T-cell (primary cell): ENCODE measurements at regions of chr1 and their contacts with region 1.

Region 1: DNA sequence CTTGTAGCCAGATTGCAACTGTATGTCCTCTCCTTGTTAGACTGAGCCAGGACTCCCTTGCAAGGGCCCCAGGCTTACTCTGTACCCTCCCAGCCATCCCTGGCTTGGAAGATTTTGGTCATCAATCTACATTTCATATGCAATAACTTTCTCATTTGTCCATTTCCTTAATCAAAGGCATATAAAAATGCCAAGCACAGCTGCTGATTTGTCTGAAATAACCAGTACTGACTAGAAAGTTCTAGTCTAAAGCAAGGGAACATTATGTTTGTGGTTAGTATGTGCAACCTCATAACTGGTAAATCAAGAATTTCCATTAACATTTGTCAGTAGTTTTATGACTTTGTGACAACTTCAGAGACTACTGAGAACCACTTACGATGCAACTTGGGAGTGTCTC is 370.2 kb downstream of the ST6GALNAC3 start:
- DNase-seq: no peak
- ATAC-seq: no peak
- H3K4me3 ChIP-seq: no peak overlapping the region
- H3K4me3 Mint-ChIP-seq: no peak overlapping the region
- H3K27ac ChIP-seq: no peak overlapping the region
- H3K27ac Mint-ChIP-seq: no peak overlapping the region
- H3K4me1 ChIP-seq: no peaks in the 10 kb centered on the region
- H3K4me1 Mint-ChIP-seq: no peaks in the 10 kb centered on the region
- H3K27me3 ChIP-seq: no peaks in the 10 kb centered on the region
- H3K27me3 Mint-ChIP-seq: no peaks in the 10 kb centered on the region

Region 2: GRCh38 chr1:75079538-75080290 is 1365.1 kb before region 1 on chr1:
- CTCF ChIA-PET with region 1: no interaction called
- POLR2A ChIA-PET with region 1: no interaction called
- DNase-seq: no peak
- ATAC-seq: no peak
- H3K4me3 ChIP-seq: no peak overlapping the region
- H3K4me3 Mint-ChIP-seq: no peak overlapping the region
- H3K27ac ChIP-seq: no peak overlapping the region
- H3K27ac Mint-ChIP-seq: no peak overlapping the region
- H3K4me1 ChIP-seq: no peaks in the 10 kb centered on the region
- H3K4me1 Mint-ChIP-seq: no peaks in the 10 kb centered on the region
- H3K27me3 ChIP-seq: no peaks in the 10 kb centered on the region
- H3K27me3 Mint-ChIP-seq: no peaks in the 10 kb centered on the region

Region 3: GRCh38 chr1:76388261-76388660 is 56.5 kb before region 1 on chr1:
- CTCF ChIA-PET with region 1: no interaction called
- POLR2A ChIA-PET with region 1: interaction called in 1 of 2 experiments, 16 read pairs
- DNase-seq: no peak
- ATAC-seq: no peak
- H3K4me3 ChIP-seq: no peak overlapping the region
- H3K4me3 Mint-ChIP-seq: no peak overlapping the region
- H3K27ac ChIP-seq: no peak overlapping the region
- H3K27ac Mint-ChIP-seq: no peak overlapping the region
- H3K4me1 ChIP-seq: no peaks in the 10 kb centered on the region
- H3K4me1 Mint-ChIP-seq: peaks cover 0 to 10% (median 3%) of the 10 kb centered on the region in 3 donors
- H3K27me3 ChIP-seq: no peaks in the 10 kb centered on the region
- H3K27me3 Mint-ChIP-seq: no peaks in the 10 kb centered on the region

Region 4: DNA sequence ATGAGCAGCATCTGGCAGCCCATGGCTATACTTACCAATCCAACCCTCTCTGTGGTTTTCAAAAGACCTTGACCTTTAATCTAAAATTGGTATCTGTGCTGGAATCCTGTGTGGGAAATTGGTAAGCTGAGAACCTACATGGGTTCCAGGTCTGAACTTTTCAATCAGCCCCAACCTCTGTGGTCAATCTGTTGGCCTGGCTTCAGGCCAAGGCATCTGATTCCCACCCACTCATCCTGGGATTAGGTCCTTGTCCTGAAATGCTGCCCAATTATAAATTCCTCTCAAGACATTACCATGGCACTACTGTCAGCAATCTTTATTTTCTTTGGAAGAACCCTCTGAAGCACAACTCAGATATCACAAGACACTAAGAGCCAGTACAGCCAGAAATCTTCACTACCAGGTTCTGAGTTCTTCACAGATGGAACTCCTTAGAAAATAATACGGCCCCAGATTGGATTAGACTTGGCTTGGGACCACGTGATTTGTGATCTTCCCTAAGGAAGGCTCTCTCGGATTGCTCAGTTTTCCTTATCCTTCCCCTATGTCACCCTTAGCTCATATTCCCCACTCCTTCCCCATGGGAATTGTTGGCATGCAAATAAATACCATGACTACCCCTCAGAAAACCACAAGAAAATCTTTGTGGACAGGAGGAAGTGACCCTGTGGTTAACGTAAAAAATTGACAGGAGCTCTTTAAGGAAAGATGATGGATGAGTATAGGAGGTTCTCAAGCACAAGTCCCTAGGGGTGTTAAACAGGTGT is 214.6 kb after region 1 on chr1:
- CTCF ChIA-PET with region 1: no interaction called
- POLR2A ChIA-PET with region 1: no interaction called
- DNase-seq: no peak
- ATAC-seq: no peak
- H3K4me3 ChIP-seq: no peak overlapping the region
- H3K4me3 Mint-ChIP-seq: no peak overlapping the region
- H3K27ac ChIP-seq: no peak overlapping the region
- H3K27ac Mint-ChIP-seq: no peak overlapping the region
- H3K4me1 ChIP-seq: no peaks in the 10 kb centered on the region
- H3K4me1 Mint-ChIP-seq: no peaks in the 10 kb centered on the region
- H3K27me3 ChIP-seq: no peaks in the 10 kb centered on the region
- H3K27me3 Mint-ChIP-seq: peaks cover 0 to 7% of the 10 kb centered on the region in 2 donors